HepG2 (cell line): ENCODE measurements at regions of chr14 and their contacts with region 1.

Region 1: DNA sequence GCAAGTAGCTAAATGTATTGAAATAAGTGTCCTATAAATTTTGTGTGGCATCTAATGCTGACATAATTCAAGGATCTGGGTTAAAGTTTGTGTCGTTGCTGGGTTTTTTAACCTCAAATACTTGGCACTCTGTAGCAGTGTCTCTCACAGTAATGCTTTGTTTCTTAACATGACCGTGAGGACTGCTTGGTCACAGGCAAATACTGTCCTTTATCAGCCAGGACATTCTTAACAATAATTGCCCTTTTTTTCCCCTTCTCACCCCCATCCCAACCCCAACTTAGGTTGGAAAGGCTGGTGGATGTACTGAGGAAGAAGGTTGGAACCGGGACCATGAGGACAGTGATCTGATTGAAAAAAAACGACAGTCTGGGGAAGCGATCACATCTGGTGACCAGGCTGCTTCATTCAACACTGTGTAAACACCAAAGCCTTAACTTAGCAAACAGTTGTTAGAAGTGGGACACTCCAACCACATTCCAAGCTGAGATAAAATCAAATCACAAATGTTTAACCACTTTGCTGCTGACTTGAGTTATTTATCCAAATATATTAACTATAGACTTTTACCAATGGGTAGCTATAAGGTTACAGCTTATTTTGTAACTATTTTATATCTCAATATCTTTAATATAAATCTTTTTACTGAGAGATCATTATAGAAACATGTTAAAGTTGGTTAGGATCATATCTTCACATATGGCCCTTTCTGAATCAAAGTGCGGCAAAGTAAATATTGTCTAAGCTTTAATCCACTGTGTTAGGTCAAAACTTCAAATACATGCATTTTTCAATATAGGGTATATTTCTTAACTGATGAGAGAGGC is 48.2 kb downstream of the FOXA1 start:
- DNase-seq: peak; percentile 100
- ATAC-seq: peak; percentile 100
- H3K4me3 ChIP-seq: peak overlapping the region; percentile 5 to 38 (median 29); a peak in 5 of 6 replicates
- H3K27ac ChIP-seq: peak overlapping the region; percentile 73
- H3K4me1 ChIP-seq: peaks cover 36% of the 10 kb centered on the region
- H3K27me3 ChIP-seq: no peaks in the 10 kb centered on the region
- CTCF ChIP-seq: no peak
- EP300 ChIP-seq: peak; percentile 77 to 98; a peak in 3 of 4 replicates
- POLR2A ChIP-seq: peak in 1 of 2 experiments; percentile 47; a peak in 1 of 4 replicates
- RAD21 ChIP-seq: peak; percentile 50; the same call in 1 of the 2 replicates

Region 2: DNA sequence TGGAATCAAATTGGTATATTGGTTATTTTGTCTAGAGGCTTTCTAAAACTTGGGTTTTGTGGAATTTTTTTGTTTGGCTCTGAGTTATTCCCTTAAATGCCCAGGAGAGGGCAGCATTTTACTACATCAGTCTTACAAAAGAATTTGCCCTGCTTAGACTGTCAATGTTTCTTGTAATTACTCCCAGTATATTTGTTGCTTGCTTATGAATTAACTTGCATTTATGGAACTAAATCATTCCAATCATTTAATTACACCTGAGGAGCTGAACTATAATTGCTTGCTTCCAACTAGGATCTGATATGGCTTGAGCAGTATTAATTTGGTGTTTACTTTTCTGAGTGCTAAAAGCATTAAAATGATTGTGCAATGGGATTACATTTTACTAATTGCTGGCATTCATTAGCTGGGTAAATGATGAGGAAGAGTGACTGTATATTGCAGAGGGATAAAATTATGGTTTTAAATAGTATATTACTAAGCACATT is 300.4 kb before region 1 on chr14:
- CTCF ChIA-PET with region 1: no interaction called
- POLR2A ChIA-PET with region 1: no interaction called
- in situ Hi-C with region 1: no loop called
- intact Hi-C with region 1: loop called (anchors 5 kb)
- DNase-seq: peak; percentile 86
- ATAC-seq: peak; percentile 79
- H3K4me3 ChIP-seq: no peak overlapping the region
- H3K27ac ChIP-seq: no peak overlapping the region
- H3K4me1 ChIP-seq: peaks cover 33% of the 10 kb centered on the region
- H3K27me3 ChIP-seq: no peaks in the 10 kb centered on the region
- CTCF ChIP-seq: peak; percentile 88
- EP300 ChIP-seq: peak in 1 of 2 experiments; percentile 37; a peak in 1 of 4 replicates
- POLR2A ChIP-seq: no peak
- RAD21 ChIP-seq: peak; percentile 93

Region 3: DNA sequence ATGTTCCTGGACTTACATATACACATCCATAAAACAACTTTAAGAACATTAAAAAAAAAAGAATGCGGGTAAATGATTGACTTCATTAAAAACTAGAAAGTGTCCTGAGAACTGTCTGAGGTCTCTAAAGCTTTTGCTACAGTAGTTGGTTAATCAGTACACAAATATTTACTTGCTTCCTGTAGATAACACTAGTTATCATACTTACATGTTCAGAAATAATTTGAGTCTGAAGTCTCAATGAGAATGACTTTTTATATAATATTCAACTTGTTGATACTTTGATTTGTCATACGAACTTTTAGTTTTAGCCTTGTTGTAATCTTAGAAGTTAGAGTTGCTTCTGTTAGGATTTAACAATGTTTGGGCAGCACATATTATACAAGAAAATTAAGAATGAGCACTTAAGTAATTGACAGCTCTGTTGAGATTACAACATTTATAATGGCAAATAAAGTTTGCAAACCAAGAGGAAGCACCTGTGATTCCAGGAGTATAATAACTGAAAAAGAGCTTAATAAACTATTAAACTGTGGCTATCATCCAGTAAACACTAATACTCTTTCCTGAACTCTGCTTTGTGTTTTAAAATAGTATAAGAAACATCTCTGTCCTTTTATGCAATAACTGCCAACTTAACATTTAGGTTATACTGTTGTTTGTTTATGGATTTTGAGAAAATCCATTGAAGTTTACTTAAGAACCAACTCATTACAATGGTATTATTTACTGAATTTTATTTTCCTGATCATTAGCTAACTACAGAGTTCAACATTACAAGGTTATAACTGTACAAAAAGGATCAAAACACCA is 217.4 kb before region 1 on chr14:
- CTCF ChIA-PET with region 1: interaction called, 3 read pairs
- POLR2A ChIA-PET with region 1: interaction called, 3 read pairs
- in situ Hi-C with region 1: no loop called
- intact Hi-C with region 1: loop called (anchors 1 kb)
- DNase-seq: peak; percentile 92
- ATAC-seq: peak; percentile 98
- H3K4me3 ChIP-seq: peak overlapping the region in 2 of 3 experiments; percentile 23 to 26; a peak in 3 of 6 replicates
- H3K27ac ChIP-seq: peak overlapping the region; percentile 57
- H3K4me1 ChIP-seq: peaks cover 30% of the 10 kb centered on the region
- H3K27me3 ChIP-seq: no peaks in the 10 kb centered on the region
- CTCF ChIP-seq: no peak
- EP300 ChIP-seq: peak; percentile 41 to 91; a peak in 3 of 4 replicates
- POLR2A ChIP-seq: no peak
- RAD21 ChIP-seq: no peak

Region 4: DNA sequence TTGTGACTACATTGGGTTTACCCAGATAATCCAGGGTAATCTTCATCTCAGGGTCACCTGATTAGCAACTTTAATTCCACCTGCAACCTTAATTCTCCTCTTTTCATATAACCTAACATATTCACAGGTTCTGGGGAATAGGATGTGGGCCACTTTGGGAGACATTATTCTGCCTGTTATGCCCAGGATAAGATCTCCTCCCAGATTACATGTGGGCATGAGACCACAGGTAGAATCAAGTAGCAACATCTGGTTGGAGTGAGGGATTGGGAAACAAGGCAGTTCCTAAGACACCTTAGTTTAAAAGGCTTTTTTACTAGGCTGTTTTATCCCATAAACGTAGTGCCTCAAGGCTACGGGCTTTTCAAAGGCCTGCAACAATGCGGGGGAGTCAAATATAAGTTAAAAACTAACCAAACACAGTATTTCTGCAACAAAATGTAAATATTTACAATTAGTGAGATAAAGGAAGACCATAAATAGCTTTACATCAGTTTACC is 133.3 kb before region 1 on chr14:
- CTCF ChIA-PET with region 1: no interaction called
- POLR2A ChIA-PET with region 1: no interaction called
- in situ Hi-C with region 1: no loop called
- intact Hi-C with region 1: loop called (anchors 2 kb)
- DNase-seq: peak; percentile 69
- ATAC-seq: peak; percentile 91
- H3K4me3 ChIP-seq: no peak overlapping the region; a peak in 1 of 6 replicates
- H3K27ac ChIP-seq: peak overlapping the region; percentile 26
- H3K4me1 ChIP-seq: peaks cover 22% of the 10 kb centered on the region
- H3K27me3 ChIP-seq: no peaks in the 10 kb centered on the region
- CTCF ChIP-seq: no peak
- EP300 ChIP-seq: peak in 1 of 2 experiments; percentile 91; a peak in 2 of 4 replicates
- POLR2A ChIP-seq: no peak
- RAD21 ChIP-seq: no peak

Region 5: DNA sequence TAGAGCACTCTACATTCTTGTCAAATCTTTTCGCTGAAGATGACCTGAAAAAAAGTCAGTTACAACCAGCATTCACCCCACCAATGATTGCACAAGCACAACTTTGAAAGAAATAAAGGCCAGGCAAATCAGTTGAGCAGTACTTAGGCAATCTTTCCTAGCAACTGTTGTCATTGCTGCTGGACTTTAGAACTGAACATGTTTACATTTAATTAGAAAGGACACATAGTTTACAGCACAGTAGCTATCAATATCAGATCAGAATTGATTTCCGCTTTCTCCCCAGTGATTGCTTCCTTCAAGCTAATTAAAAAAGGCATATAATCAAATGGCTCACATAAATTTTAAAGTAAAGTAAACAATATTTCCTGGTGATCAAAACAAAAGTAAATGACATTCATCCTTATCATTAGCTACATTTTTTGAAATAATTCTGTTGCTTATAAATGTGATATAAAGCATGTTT is 80.2 kb before region 1 on chr14:
- CTCF ChIA-PET with region 1: no interaction called
- POLR2A ChIA-PET with region 1: interaction called, 13 read pairs
- in situ Hi-C with region 1: loop called (anchors 5 kb)
- intact Hi-C with region 1: loop called (anchors 1 kb)
- DNase-seq: peak; percentile 100
- ATAC-seq: peak; percentile 97
- H3K4me3 ChIP-seq: peak overlapping the region in 1 of 3 experiments; percentile 12; a peak in 2 of 6 replicates
- H3K27ac ChIP-seq: peak overlapping the region; percentile 81
- H3K4me1 ChIP-seq: peaks cover 46% of the 10 kb centered on the region
- H3K27me3 ChIP-seq: no peaks in the 10 kb centered on the region
- CTCF ChIP-seq: no peak
- EP300 ChIP-seq: peak; percentile 100
- POLR2A ChIP-seq: no peak
- RAD21 ChIP-seq: peak; percentile 67